GM12878 (cell line): ENCODE measurements at regions of chr11 and their contacts with region 1.

Region 1: GRCh38 chr11:19646921-19647320 is 65.7 kb upstream of the NAV2 start:
- DNase-seq: no peak
- ATAC-seq: no peak
- H3K4me3 ChIP-seq: no peak overlapping the region
- H3K27ac ChIP-seq: no peak overlapping the region
- H3K4me1 ChIP-seq: no peaks in the 10 kb centered on the region
- H3K27me3 ChIP-seq: peaks cover 0 to 3% of the 10 kb centered on the region in 2 experiments; a peak in 1 of 4 replicates
- CTCF ChIP-seq: no peak
- EP300 ChIP-seq: no peak
- POLR2A ChIP-seq: no peak
- RAD21 ChIP-seq: no peak

Region 2: GRCh38 chr11:19577976-19578619 is 68.8 kb before region 1 on chr11:
- CTCF ChIA-PET with region 1: no interaction called
- POLR2A ChIA-PET with region 1: no interaction called
- RAD21 ChIA-PET with region 1: no interaction called
- SMC1A ChIA-PET with region 1: no interaction called
- in situ Hi-C with region 1: no loop called
- intact Hi-C with region 1: loop called (anchors 10 kb)
- DNase-seq: no peak
- ATAC-seq: no peak
- H3K4me3 ChIP-seq: no peak overlapping the region
- H3K27ac ChIP-seq: no peak overlapping the region
- H3K4me1 ChIP-seq: no peaks in the 10 kb centered on the region
- H3K27me3 ChIP-seq: no peaks in the 10 kb centered on the region; a peak in 2 of 4 replicates
- CTCF ChIP-seq: no peak
- EP300 ChIP-seq: no peak
- POLR2A ChIP-seq: no peak
- RAD21 ChIP-seq: no peak

Region 3: GRCh38 chr11:19698493-19699292 is 51.8 kb after region 1 on chr11:
- CTCF ChIA-PET with region 1: no interaction called
- POLR2A ChIA-PET with region 1: no interaction called
- RAD21 ChIA-PET with region 1: no interaction called
- SMC1A ChIA-PET with region 1: no interaction called
- in situ Hi-C with region 1: no loop called
- intact Hi-C with region 1: loop called (anchors 5 kb)
- DNase-seq: no peak
- ATAC-seq: no peak
- H3K4me3 ChIP-seq: no peak overlapping the region
- H3K27ac ChIP-seq: no peak overlapping the region
- H3K4me1 ChIP-seq: no peaks in the 10 kb centered on the region
- H3K27me3 ChIP-seq: no peaks in the 10 kb centered on the region; a peak in 2 of 4 replicates
- CTCF ChIP-seq: no peak
- EP300 ChIP-seq: no peak
- POLR2A ChIP-seq: no peak
- RAD21 ChIP-seq: no peak